GM10248 (cell line): ENCODE measurements at regions of chr12 and their contacts with region 1.

Region 1: GRCh38 chr12:54641554-54641953 is 6.6 kb downstream of the DCD start:
- DNase-seq: no peak
- CTCF ChIP-seq: no peak

Region 2: DNA sequence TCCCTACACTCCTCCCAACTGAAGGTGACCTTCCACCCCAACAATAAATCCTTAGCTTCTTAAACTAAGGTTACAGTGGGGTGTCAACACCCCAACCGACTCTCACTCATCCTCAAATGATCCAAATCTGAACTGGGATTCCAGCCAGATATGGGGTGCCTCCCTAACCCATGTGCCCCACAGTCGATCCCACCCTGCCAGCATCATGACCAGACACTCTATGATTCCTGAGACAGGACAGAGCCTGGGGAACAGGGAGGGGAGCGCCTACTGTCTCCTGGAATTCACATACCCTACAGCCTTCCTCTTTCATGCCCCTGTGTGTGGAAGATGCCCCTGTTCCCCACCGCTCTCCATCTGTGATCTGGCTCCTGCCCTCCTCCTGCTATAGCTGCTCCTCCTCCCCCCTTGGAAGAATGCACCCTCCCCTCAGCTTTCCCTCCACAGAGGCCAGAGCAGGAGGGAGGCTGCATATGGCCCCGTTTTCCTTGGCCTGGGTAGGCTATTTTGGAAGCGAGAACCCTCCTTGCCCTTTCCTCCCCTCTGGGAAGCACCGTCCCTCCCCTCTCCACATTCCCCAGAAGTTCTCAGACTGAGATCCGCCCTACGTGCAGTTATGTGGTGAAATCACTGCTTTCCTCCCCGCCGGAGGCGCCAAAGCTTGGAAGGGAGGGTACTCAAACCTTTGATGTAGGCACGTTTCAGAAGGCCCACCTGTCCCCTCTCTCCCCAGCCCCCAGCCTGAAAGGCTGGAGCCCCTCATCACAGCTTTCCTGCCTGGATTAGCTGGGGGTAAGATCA is 500.8 kb before region 1 on chr12:
- CTCF ChIA-PET with region 1: no interaction called
- POLR2A ChIA-PET with region 1: no interaction called
- DNase-seq: no peak
- CTCF ChIP-seq: no peak

Region 3: GRCh38 chr12:54588110-54588889 is 53.3 kb before region 1 on chr12 and contains the start of gene PPP1R1A:
- CTCF ChIA-PET with region 1: no interaction called
- POLR2A ChIA-PET with region 1: no interaction called
- DNase-seq: no peak
- CTCF ChIP-seq: no peak

Region 4: DNA sequence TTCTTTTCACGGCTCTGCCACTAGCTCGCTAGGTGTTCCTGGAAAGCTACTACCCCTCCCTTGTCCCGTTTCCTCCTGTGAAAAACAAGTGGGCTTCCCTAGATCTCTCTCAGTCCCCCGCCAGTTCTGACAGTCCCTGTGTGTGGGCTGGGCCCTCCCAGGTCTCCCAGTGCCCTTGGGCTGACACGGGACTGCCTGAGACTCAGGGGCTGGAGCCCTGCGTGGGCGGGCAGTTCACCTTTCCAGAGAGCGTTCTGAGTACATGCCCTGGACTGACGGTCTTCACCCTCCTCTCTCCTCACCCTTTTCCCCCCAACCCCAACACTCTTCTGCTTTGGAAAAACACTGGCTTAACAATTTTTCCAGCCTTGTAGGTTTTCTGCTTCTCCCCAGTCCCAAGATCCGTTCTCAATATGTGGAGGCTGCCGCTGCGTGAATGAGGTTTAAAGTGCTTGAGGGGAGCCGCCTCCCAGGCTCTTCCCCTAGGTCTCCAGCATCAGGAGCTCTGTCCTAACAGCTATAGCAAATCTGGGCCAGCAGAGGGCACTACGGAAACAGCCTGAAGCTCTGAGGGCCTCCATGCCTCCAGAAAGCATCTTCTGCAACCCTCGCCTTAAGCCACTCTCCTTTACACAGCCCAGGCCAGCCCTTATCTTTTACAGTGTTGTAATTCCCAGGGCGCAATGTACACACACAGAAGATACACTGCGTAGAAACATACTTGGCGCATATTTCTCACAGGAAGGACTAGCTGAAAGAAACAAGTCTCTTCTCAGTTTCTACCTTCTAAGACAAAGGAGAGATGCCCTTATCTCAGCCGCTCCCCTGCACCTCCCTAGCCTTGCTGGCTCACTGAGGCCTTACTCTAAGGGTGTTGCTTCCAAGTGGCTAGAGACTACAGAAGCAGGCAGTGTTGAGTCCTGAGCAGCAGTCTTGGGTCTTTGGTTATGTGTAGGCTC is 17.0 kb after region 1 on chr12:
- CTCF ChIA-PET with region 1: interaction called, 74 read pairs
- POLR2A ChIA-PET with region 1: interaction called, 6 read pairs
- DNase-seq: peak; percentile 75
- CTCF ChIP-seq: peak; percentile 77

Region 5: GRCh38 chr12:54821676-54822075 is 180.1 kb after region 1 on chr12:
- CTCF ChIA-PET with region 1: no interaction called
- POLR2A ChIA-PET with region 1: no interaction called
- DNase-seq: no peak
- CTCF ChIP-seq: no peak